Endothelial cell of umbilical vein (primary cell): ENCODE measurements at regions of chr13 and their contacts with region 1.

Region 1: DNA sequence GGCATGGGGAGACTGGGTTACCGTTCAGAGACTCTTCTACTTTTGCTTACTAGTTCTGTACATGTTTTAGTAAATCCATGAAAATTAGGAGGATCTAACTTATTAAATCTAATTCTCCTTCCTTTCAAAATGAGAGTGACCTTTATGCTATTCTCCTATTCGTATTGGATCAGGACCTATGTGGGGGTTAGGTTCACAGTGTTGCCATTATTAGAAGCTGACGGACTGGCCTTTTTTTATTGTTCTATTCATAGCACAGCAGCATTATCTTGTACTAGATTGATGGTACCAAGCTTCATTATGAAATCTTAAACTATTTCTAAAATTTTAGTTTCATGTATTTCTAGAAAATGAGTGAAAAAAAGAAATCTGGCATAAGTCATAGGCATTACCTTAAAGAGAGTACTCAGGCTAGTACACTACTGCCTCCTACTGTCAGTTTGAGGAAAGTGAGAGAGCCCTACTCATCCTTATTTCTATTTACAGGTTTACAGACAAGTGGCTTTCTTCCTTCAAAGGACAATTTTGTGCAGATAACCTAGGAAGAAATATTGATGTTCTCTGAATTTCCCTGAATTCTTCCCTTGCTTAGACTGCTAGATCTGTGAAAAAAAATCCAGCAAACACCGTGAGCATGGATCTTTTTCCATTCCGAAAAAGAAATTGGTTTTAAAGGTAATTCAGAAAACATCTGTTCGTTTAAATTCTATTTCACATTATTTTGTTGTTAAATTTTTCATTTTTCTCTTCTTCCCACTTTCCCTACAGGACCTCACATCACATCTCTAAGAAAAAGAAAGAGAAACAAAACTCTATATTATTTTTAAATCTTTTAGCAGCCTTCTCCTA is 485.5 kb downstream of the DIAPH3 start:
- DNase-seq: peak; percentile 79
- H3K4me3 ChIP-seq: no peak overlapping the region
- H3K27ac ChIP-seq: no peak overlapping the region
- H3K4me1 ChIP-seq: peaks cover 2% of the 10 kb centered on the region
- H3K27me3 ChIP-seq: no peaks in the 10 kb centered on the region
- CTCF ChIP-seq: peak; percentile 69 to 70
- POLR2A ChIP-seq: no peak

Region 2: GRCh38 chr13:59318320-59318930 is 359.8 kb before region 1 on chr13:
- CTCF ChIA-PET with region 1: interaction called, 4 read pairs
- POLR2A ChIA-PET with region 1: no interaction called
- dilution Hi-C with region 1: no loop called
- intact Hi-C with region 1: loop called (anchors 1 kb)
- DNase-seq: peak; percentile 86
- H3K4me3 ChIP-seq: no peak overlapping the region
- H3K27ac ChIP-seq: no peak overlapping the region
- H3K4me1 ChIP-seq: peaks cover 23% of the 10 kb centered on the region
- H3K27me3 ChIP-seq: no peaks in the 10 kb centered on the region
- CTCF ChIP-seq: peak; percentile 68 to 71
- POLR2A ChIP-seq: no peak

Region 3: GRCh38 chr13:59458908-59459579 is 219.1 kb before region 1 on chr13:
- CTCF ChIA-PET with region 1: interaction called, 25 read pairs
- POLR2A ChIA-PET with region 1: no interaction called
- dilution Hi-C with region 1: no loop called
- intact Hi-C with region 1: loop called (anchors 1 kb)
- DNase-seq: peak; percentile 91
- H3K4me3 ChIP-seq: peak overlapping the region in 1 of 3 experiments; percentile 8
- H3K27ac ChIP-seq: peak overlapping the region; percentile 87
- H3K4me1 ChIP-seq: peaks cover 36% of the 10 kb centered on the region
- H3K27me3 ChIP-seq: no peaks in the 10 kb centered on the region
- CTCF ChIP-seq: no peak
- POLR2A ChIP-seq: no peak

Region 4: DNA sequence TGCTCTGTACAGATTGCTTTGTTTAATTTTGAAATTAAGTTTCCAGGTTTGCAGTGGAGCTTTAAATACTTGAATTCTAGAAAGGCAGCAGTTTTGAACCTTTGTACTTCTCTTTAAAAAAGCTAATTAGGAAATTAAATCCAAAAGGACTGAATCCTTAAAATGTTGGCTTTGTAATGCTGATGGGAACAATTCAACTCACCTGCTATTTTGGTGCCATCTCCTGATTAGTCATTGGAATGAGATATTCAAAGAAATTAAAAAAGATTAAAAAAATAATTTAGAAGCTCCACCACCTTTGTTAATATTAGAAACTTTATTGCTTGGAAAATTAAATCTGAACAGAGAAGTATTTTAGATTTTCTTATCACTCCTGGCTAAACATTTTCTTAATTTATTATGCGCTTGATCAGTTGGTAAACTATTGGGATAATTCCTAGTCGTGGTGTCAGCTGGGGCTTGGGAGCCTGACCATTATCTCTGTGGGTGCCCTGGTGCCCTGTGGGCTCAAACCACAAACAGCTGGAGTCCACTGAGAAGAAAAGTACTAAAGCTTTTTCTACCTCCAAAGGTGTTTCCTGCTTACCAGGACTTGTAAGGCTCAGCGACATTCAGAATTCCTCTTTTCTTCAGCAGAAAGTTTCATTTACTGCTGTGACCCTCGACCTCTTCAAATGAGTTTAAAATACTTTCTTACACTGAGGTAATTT is 54.8 kb before region 1 on chr13:
- CTCF ChIA-PET with region 1: no interaction called
- POLR2A ChIA-PET with region 1: no interaction called
- dilution Hi-C with region 1: no loop called
- intact Hi-C with region 1: no loop called
- DNase-seq: no peak
- H3K4me3 ChIP-seq: no peak overlapping the region
- H3K27ac ChIP-seq: no peak overlapping the region
- H3K4me1 ChIP-seq: no peaks in the 10 kb centered on the region
- H3K27me3 ChIP-seq: no peaks in the 10 kb centered on the region
- CTCF ChIP-seq: no peak
- POLR2A ChIP-seq: no peak

Region 5: DNA sequence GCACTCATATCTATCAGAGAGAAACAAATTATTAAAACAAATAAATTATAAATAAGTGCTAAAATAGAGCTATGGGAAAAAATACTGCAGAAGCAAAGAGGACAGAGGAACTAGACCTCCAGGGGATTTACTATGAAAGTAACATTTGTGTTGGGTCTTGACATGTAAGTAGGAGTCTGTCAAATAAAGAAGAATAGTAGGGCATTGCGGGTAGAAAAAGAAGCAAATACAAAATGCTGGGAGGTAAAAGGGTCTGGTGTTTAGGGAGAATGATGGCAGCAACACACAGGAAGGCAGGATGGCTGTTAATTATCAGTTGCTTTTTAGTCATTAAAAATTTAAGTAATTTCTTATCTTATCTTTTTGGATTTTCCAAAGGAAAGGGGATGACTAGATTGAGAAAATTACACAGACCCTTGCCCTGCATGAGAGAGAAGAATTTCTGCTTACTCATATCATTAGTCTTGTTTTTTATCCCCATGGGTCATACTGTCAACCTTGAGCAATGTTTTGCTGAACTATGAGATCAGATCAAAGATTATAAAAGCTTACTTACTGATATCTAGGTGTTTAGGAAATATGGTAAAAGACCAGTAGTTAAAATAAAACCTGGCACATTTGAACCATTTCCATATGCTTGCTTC is 12.8 kb after region 1 on chr13:
- CTCF ChIA-PET with region 1: interaction called, 13 read pairs
- POLR2A ChIA-PET with region 1: no interaction called
- dilution Hi-C with region 1: no loop called
- intact Hi-C with region 1: no loop called
- DNase-seq: no peak
- H3K4me3 ChIP-seq: no peak overlapping the region
- H3K27ac ChIP-seq: no peak overlapping the region
- H3K4me1 ChIP-seq: no peaks in the 10 kb centered on the region
- H3K27me3 ChIP-seq: no peaks in the 10 kb centered on the region
- CTCF ChIP-seq: no peak
- POLR2A ChIP-seq: no peak

Region 6: GRCh38 chr13:60226507-60226906 is 548.3 kb after region 1 on chr13:
- CTCF ChIA-PET with region 1: interaction called, 9 read pairs
- POLR2A ChIA-PET with region 1: no interaction called
- dilution Hi-C with region 1: no loop called
- intact Hi-C with region 1: loop called (anchors 1 kb)
- DNase-seq: peak; percentile 9
- H3K4me3 ChIP-seq: no peak overlapping the region
- H3K27ac ChIP-seq: no peak overlapping the region
- H3K4me1 ChIP-seq: no peaks in the 10 kb centered on the region
- H3K27me3 ChIP-seq: peaks cover 7% of the 10 kb centered on the region in 2 experiments
- CTCF ChIP-seq: peak; percentile 10 to 32
- POLR2A ChIP-seq: no peak

Region 7: GRCh38 chr13:60431108-60431700 is 753.0 kb after region 1 on chr13:
- CTCF ChIA-PET with region 1: interaction called, 91 read pairs
- POLR2A ChIA-PET with region 1: no interaction called
- dilution Hi-C with region 1: no loop called
- intact Hi-C with region 1: loop called (anchors 1 kb)
- DNase-seq: peak; percentile 80
- H3K4me3 ChIP-seq: no peak overlapping the region
- H3K27ac ChIP-seq: no peak overlapping the region
- H3K4me1 ChIP-seq: peaks cover 6% of the 10 kb centered on the region
- H3K27me3 ChIP-seq: no peaks in the 10 kb centered on the region
- CTCF ChIP-seq: peak; percentile 44 to 63
- POLR2A ChIP-seq: no peak